Aorta (tissue), 5 donors: ENCODE measurements at regions of chr19 and their contacts with region 1.

Region 1: GRCh38 chr19:41959056-41960053 is at the start of gene RABAC1:
- DNase-seq: peak; percentile 93 to 95
- ATAC-seq: peak; percentile 95
- H3K4me3 ChIP-seq: peak within 1 kb of the TSS; percentile 82 to 89
- H3K27ac ChIP-seq: peak within 1 kb of the TSS; percentile 43 to 71
- H3K4me1 ChIP-seq: no peaks in the 10 kb centered on the region
- H3K27me3 ChIP-seq: no peaks in the 10 kb centered on the region
- total RNA-seq, gene RABAC1: 175 to 198 TPM

Region 2: GRCh38 chr19:41859618-41860418 is 99.5 kb before region 1 on chr19 and contains the start of gene RPS19:
- intact Hi-C with region 1: loop called in 1 of 2 experiments (anchors 2 kb)
- DNase-seq: peak; percentile 98 to 100
- ATAC-seq: peak; percentile 99
- H3K4me3 ChIP-seq: peak within 1 kb of the TSS; percentile 62 to 75
- H3K27ac ChIP-seq: peak within 1 kb of the TSS in 1 of 2 donors; percentile 79
- H3K4me1 ChIP-seq: peaks cover 0 to 6% of the 10 kb centered on the region in 2 donors
- H3K27me3 ChIP-seq: no peaks in the 10 kb centered on the region
- total RNA-seq, gene RPS19: 1,062 to 1,150 TPM

Region 3: GRCh38 chr19:41883821-41884733 is 75.3 kb before region 1 on chr19:
- intact Hi-C with region 1: loop called (anchors 5 to 10 kb)
- DNase-seq: peak; percentile 97 to 98
- ATAC-seq: peak; percentile 98
- H3K4me3 ChIP-seq: peak overlapping the region; percentile 95 to 96
- H3K27ac ChIP-seq: no peak overlapping the region
- H3K4me1 ChIP-seq: no peaks in the 10 kb centered on the region
- H3K27me3 ChIP-seq: no peaks in the 10 kb centered on the region

Region 4: GRCh38 chr19:42132851-42133528 is 173.6 kb after region 1 on chr19:
- intact Hi-C with region 1: no loop called
- DNase-seq: peak; percentile 69 to 90
- ATAC-seq: peak; percentile 89
- H3K4me3 ChIP-seq: no peak overlapping the region
- H3K27ac ChIP-seq: no peak overlapping the region
- H3K4me1 ChIP-seq: no peaks in the 10 kb centered on the region
- H3K27me3 ChIP-seq: no peaks in the 10 kb centered on the region

Region 5: GRCh38 chr19:42176990-42177685 is 217.8 kb after region 1 on chr19:
- intact Hi-C with region 1: no loop called
- DNase-seq: peak; percentile 85 to 92
- ATAC-seq: peak; percentile 82
- H3K4me3 ChIP-seq: peak overlapping the region; percentile 40 to 52
- H3K27ac ChIP-seq: no peak overlapping the region
- H3K4me1 ChIP-seq: no peaks in the 10 kb centered on the region
- H3K27me3 ChIP-seq: no peaks in the 10 kb centered on the region